ENCODE measurements at regions of chr5 and their contacts with region 1.

Region 1: DNA sequence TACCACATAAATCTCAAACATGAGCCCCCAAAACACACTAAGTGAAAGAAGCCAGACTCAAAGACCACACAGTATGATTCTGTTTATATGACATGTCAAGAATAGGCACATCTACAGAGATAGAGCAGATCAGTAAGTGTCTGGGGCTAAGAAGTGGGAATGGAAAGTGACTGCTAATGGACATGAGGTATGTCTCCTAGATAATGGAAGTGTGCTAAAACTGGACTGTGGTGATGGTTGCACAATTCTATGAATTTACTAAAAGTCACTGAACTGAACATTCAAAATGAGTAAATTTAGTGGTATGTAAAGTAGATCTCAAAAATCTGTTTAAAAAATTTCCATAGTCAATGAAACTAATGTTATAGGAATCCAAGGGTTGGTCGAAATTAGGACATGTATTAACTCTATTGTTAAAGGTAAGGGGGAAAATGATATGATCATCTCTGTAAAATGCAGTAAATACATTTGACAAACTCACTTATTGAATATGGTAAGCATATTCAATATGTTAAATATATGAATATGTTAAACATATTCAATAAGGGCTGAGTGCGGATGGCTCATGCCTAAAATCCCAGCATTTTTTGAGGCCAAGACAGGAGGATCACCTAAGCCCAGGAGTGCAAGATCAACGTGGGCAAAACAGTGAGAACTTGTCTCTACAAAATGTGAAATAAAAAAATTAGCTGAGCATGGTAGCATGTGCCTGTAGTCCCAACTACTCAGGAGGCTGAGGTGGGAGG is 51.7 kb downstream of the NUP155 start:
- DNase-seq: no peak
- H3K4me3 ChIP-seq: no peak overlapping the region
- H3K27ac ChIP-seq: no peak overlapping the region
- H3K4me1 ChIP-seq: peaks cover 8% of the 10 kb centered on the region
- H3K27me3 ChIP-seq: no peaks in the 10 kb centered on the region
- CTCF ChIP-seq: no peak
- POLR2A ChIP-seq: no peak

Region 2: DNA sequence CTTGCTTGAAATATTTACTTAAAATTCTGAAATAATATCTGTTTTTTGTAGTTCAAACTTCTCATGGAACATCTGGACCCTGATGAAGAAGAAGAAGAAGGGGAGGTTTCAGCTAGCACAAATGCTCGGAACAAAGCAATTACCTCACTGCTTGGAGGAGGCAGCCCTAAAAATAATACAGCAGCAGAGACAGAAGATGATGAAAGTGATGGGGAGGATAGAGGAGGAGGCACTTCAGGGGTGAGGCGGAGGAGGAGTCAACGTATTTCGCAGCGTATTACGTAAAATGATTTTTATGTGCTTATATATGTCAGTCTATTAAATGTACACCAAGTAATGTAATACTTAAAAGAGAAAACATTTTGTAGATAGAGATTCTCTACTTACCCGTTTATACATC is 255.5 kb before region 1 on chr5:
- CTCF ChIA-PET with region 1: no interaction called
- POLR2A ChIA-PET with region 1: no interaction called
- dilution Hi-C with region 1: no loop called
- intact Hi-C with region 1: loop called (anchors 10 kb)
- DNase-seq: no peak
- H3K4me3 ChIP-seq: no peak overlapping the region
- H3K27ac ChIP-seq: no peak overlapping the region
- H3K4me1 ChIP-seq: no peaks in the 10 kb centered on the region
- H3K27me3 ChIP-seq: no peaks in the 10 kb centered on the region
- CTCF ChIP-seq: no peak
- POLR2A ChIP-seq: no peak

Region 3: DNA sequence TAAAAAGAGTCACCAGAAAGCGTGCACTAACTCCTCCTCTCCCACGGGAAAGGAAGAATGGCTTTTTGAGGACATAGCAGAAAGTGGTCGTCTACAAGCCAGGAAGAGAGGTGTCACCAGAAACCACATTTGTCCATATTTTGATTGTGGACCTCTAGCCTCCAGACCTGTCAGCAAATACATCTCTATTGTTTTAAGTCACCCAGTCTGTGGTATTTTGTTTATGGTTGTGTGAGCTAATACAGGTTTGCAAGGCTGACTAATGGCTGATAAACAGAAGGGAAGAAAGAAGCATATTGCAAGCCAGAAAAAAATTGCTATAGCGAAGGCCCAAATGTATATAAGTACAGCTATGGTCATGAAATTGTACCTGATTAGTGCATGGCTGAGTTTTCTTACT is 81.3 kb after region 1 on chr5:
- CTCF ChIA-PET with region 1: no interaction called
- POLR2A ChIA-PET with region 1: no interaction called
- dilution Hi-C with region 1: no loop called
- intact Hi-C with region 1: no loop called
- DNase-seq: no peak
- H3K4me3 ChIP-seq: no peak overlapping the region
- H3K27ac ChIP-seq: no peak overlapping the region
- H3K4me1 ChIP-seq: no peaks in the 10 kb centered on the region
- H3K27me3 ChIP-seq: no peaks in the 10 kb centered on the region
- CTCF ChIP-seq: no peak
- POLR2A ChIP-seq: no peak